ENCODE measurements at regions of chr4 and their contacts with region 1.

Region 1: GRCh38 chr4:89101256-89102161 is 9.8 kb upstream of the TIGD2 start:
- DNase-seq: no peak
- ATAC-seq: no peak
- H3K4me3 ChIP-seq: no peak overlapping the region
- H3K27ac ChIP-seq: no peak overlapping the region
- H3K4me1 ChIP-seq: no peaks in the 10 kb centered on the region
- H3K27me3 ChIP-seq: no peaks in the 10 kb centered on the region
- CTCF ChIP-seq: no peak
- POLR2A ChIP-seq: no peak

Region 2: GRCh38 chr4:89056953-89057398 is 44.5 kb before region 1 on chr4 and contains the start of gene FAM13A:
- in situ Hi-C with region 1: loop called in 1 of 4 experiments (anchors 10 kb)
- intact Hi-C with region 1: no loop called
- DNase-seq: peak; percentile 81 to 91
- ATAC-seq: peak; percentile 100
- H3K4me3 ChIP-seq: peak within 1 kb of the TSS; percentile 47 to 57 (median 57)
- H3K27ac ChIP-seq: peak within 1 kb of the TSS; percentile 68 to 82 (median 76)
- H3K4me1 ChIP-seq: peaks cover 20 to 32% of the 10 kb centered on the region in 2 donors
- H3K27me3 ChIP-seq: no peaks in the 10 kb centered on the region
- CTCF ChIP-seq: peak in 1 of 5 experiments; percentile 18
- POLR2A ChIP-seq: no peak
- total RNA-seq, gene FAM13A: 6.7 to 14.1 (median 11.4) TPM

Region 3: DNA sequence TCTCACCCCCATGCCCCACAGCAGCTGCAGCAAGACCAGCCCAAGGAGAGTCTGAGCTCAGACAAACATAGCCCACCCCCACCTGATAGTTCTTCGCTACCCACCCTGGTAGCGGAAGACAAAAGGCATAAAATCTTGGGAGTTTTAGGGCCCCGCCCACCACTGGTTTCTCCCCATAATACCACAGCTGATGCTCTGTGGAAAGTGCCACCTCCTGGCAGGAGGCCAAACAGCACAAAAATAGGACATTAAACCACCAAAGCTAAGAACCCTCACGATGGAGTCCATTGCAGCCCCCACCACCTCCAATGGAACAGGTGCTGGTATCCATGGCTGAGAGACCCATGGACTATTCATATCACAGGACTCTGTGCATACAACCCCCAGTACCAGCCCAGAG is 508.7 kb after region 1 on chr4:
- in situ Hi-C with region 1: no loop called
- intact Hi-C with region 1: no loop called
- DNase-seq: no peak
- ATAC-seq: no peak
- H3K4me3 ChIP-seq: no peak overlapping the region
- H3K27ac ChIP-seq: no peak overlapping the region
- H3K4me1 ChIP-seq: no peaks in the 10 kb centered on the region
- H3K27me3 ChIP-seq: no peaks in the 10 kb centered on the region
- CTCF ChIP-seq: no peak
- POLR2A ChIP-seq: no peak

Measured in gastrocnemius medialis (tissue), 4 donors.